A549 (cell line): ENCODE measurements at regions of chr20 and their contacts with region 1.

Region 1: DNA sequence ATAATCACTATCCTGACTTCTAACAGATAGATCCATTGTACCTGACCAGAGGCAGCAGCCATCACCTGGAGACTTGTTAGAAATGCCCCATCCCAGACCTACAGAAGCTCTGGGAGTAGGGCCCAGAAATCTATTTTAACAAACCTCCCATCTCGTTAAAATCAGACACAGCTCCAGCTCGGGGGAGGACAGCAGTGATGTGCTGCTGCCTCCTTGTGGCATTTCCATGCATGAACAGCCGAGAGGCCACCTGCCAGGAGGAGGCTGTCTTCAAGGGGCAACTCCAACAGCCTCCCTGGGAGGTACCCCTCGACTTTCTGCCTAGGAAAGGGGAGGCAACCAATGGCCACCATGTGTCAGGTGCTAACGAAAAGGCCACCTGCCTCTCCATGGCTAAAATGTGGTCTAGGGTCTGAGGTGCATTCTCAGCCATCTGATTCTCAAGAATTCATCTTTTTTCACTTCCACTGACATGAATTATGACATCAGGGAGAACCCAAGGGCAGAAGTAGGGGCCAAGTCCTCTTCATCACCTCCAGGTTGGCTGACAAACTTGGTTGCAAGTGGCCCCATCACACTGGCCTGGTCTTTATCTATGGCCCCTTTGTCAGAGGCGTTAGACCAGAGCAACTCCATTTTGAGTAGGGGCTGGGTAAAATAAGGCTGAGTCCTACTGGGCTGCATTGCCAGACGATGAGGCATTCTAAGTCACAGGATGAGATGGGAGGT is 12.2 kb upstream of the KCNK15 start:
- DNase-seq: peak; percentile 69 to 83
- ATAC-seq: peak; percentile 20 to 46; a peak in 4 of 6 replicates
- H3K4me3 ChIP-seq: no peak overlapping the region
- H3K27ac ChIP-seq: peak overlapping the region; percentile 96 to 98
- H3K4me1 ChIP-seq: peaks cover 67% of the 10 kb centered on the region
- CTCF ChIP-seq: peak; percentile 98
- EP300 ChIP-seq: no peak
- POLR2A ChIP-seq: no peak
- RAD21 ChIP-seq: peak; percentile 100

Region 2: DNA sequence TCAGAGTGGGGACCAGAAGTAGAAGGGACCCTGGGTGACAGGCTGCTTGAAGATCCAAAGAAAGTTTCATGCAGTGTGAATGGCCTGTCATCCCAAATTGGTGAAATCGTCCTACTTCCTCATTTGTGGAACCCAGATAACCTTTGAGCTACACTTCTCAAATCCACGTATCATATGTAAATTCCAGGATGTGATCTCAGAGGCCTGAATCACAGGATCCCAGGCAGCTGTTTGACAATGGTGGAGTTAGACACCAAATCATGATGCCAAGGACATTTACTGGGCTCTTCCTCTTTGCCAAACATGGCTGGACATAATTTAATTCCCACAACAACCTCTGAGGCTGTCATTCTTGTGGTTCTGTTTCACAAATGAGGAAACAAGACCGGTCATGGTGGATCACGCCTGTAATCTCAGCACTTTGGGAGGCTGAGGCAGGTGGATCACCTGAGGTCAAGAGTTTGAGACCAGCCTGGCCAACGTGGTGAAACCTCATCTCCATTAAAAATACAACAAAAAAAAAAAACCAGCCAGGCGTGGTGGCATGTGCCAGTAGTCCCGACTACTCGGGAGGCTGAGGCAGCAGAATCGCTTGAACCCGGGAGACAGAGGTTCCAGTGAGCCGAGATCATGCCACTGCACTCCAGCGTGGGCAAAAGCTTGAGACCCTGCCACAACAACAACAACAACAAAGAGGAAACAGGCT is 297.7 kb before region 1 on chr20:
- CTCF ChIA-PET with region 1: no interaction called
- POLR2A ChIA-PET with region 1: no interaction called
- DNase-seq: peak in 1 of 2 experiments; percentile 52
- ATAC-seq: peak; percentile 23 to 30; a peak in 3 of 6 replicates
- H3K4me3 ChIP-seq: no peak overlapping the region
- H3K27ac ChIP-seq: peak overlapping the region; percentile 27 to 34; a peak in 2 of 6 replicates
- H3K4me1 ChIP-seq: peaks cover 6% of the 10 kb centered on the region
- CTCF ChIP-seq: no peak
- EP300 ChIP-seq: no peak
- POLR2A ChIP-seq: no peak
- RAD21 ChIP-seq: no peak

Region 3: GRCh38 chr20:44521484-44522481 is 211.7 kb before region 1 on chr20 and contains the start of gene SERINC3:
- CTCF ChIA-PET with region 1: no interaction called
- POLR2A ChIA-PET with region 1: no interaction called
- DNase-seq: peak; percentile 94 to 95
- ATAC-seq: peak; percentile 99
- H3K4me3 ChIP-seq: peak within 1 kb of the TSS; percentile 100
- H3K27ac ChIP-seq: peak within 1 kb of the TSS; percentile 94 to 97
- H3K4me1 ChIP-seq: peaks cover 21% of the 10 kb centered on the region
- CTCF ChIP-seq: peak; percentile 52
- EP300 ChIP-seq: no peak
- POLR2A ChIP-seq: peak; percentile 63
- RAD21 ChIP-seq: peak in 1 of 2 experiments; percentile 38; a peak in 2 of 5 replicates
- polyA plus RNA-seq, gene SERINC3: 159 and 173 TPM in 2 replicates

Region 4: GRCh38 chr20:44651684-44652423 is 81.7 kb before region 1 on chr20 and contains the start of gene ADA:
- CTCF ChIA-PET with region 1: interaction called, 10 read pairs
- POLR2A ChIA-PET with region 1: no interaction called
- DNase-seq: peak; percentile 54 to 62
- ATAC-seq: peak; percentile 81 to 86
- H3K4me3 ChIP-seq: peak within 1 kb of the TSS; percentile 70
- H3K27ac ChIP-seq: peak within 1 kb of the TSS; percentile 90 to 94
- H3K4me1 ChIP-seq: peaks cover 14% of the 10 kb centered on the region
- CTCF ChIP-seq: no peak
- EP300 ChIP-seq: no peak
- POLR2A ChIP-seq: peak; percentile 25
- RAD21 ChIP-seq: no peak
- polyA plus RNA-seq, gene ADA: 46.7 and 48.1 TPM in 2 replicates

Region 5: GRCh38 chr20:44692932-44693476 is 40.5 kb before region 1 on chr20:
- CTCF ChIA-PET with region 1: interaction called, 525 read pairs
- POLR2A ChIA-PET with region 1: interaction called, 5 read pairs
- DNase-seq: peak; percentile 92 to 96
- ATAC-seq: peak; percentile 93 to 95
- H3K4me3 ChIP-seq: no peak overlapping the region
- H3K27ac ChIP-seq: peak overlapping the region; percentile 86 to 89
- H3K4me1 ChIP-seq: peaks cover 41% of the 10 kb centered on the region
- CTCF ChIP-seq: 0 out of 3 replicates have a peak, but pooled peaks have one; percentile 8
- EP300 ChIP-seq: peak; percentile 86 to 95; a peak in 4 of 5 replicates
- POLR2A ChIP-seq: no peak
- RAD21 ChIP-seq: peak; percentile 37 to 58

Region 6: DNA sequence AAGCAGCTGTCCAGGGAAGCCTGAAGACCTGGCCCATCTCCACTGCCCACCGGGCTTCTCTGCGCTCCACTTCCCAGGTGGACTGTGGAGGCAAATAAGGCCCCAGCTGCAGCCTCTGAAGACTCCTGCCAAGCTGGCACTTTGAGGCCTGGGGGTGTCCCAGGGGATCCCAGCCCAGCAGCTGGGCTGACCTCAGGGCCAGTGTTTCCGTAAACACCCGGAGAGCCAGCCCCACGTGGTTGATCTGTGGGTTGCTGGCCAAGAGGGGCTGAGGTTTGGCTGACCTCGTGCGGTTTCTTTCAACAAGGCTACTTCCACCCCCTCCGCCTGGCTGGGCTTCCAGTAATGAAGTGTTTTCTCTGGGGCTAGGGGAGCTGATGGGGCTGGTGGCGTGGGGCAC is 30.7 kb before region 1 on chr20:
- CTCF ChIA-PET with region 1: interaction called, 22 read pairs
- POLR2A ChIA-PET with region 1: interaction called, 3 read pairs
- DNase-seq: no peak
- ATAC-seq: no peak
- H3K4me3 ChIP-seq: no peak overlapping the region
- H3K27ac ChIP-seq: peak overlapping the region; percentile 40 to 79; a peak in 4 of 6 replicates
- H3K4me1 ChIP-seq: peaks cover 47% of the 10 kb centered on the region
- CTCF ChIP-seq: no peak
- EP300 ChIP-seq: no peak
- POLR2A ChIP-seq: no peak
- RAD21 ChIP-seq: no peak

Region 7: GRCh38 chr20:44714696-44715482 is 18.6 kb before region 1 on chr20 and contains the start of gene CCN5:
- CTCF ChIA-PET with region 1: interaction called, 116 read pairs
- POLR2A ChIA-PET with region 1: interaction called, 7 read pairs
- DNase-seq: peak; percentile 79 to 80
- ATAC-seq: peak; percentile 75 to 82
- H3K4me3 ChIP-seq: peak within 1 kb of the TSS; percentile 20; the same call in 1 of the 3 replicates
- H3K27ac ChIP-seq: peak within 1 kb of the TSS; percentile 96 to 98
- H3K4me1 ChIP-seq: peaks cover 69% of the 10 kb centered on the region
- CTCF ChIP-seq: no peak
- EP300 ChIP-seq: 0 out of 5 replicates have a peak, but pooled peaks of 1 of the 2 experiments have one; percentile 8
- POLR2A ChIP-seq: no peak
- RAD21 ChIP-seq: no peak
- polyA plus RNA-seq, gene CCN5: 9.9 and 10.1 TPM in 2 replicates

Region 8: GRCh38 chr20:44720617-44720993 is 12.9 kb before region 1 on chr20:
- CTCF ChIA-PET with region 1: interaction called, 116 read pairs
- POLR2A ChIA-PET with region 1: interaction called, 20 read pairs
- DNase-seq: peak; percentile 96 to 97
- ATAC-seq: peak; percentile 94 to 95
- H3K4me3 ChIP-seq: no peak overlapping the region
- H3K27ac ChIP-seq: peak overlapping the region; percentile 96 to 98
- H3K4me1 ChIP-seq: peaks cover 86% of the 10 kb centered on the region
- CTCF ChIP-seq: no peak
- EP300 ChIP-seq: no peak; a peak in 1 of 5 replicates
- POLR2A ChIP-seq: no peak
- RAD21 ChIP-seq: no peak; a peak in 1 of 5 replicates